ENCODE measurements at regions of chr12 and their contacts with region 1.

Region 1: GRCh38 chr12:53543539-53543938 is 36.3 kb upstream of the NPFF start:
- DNase-seq: peak in 3 of 5 donors; percentile 18 to 53 (median 49)
- H3K4me3 ChIP-seq: no peak overlapping the region
- H3K4me3 Mint-ChIP-seq: no peak overlapping the region
- H3K27ac ChIP-seq: no peak overlapping the region
- H3K27ac Mint-ChIP-seq: peak overlapping the region in 7 of 8 donors; percentile 64 to 86 (median 72)
- H3K4me1 ChIP-seq: peaks cover 8% of the 10 kb centered on the region
- H3K4me1 Mint-ChIP-seq: peaks cover 4 to 12% (median 10%) of the 10 kb centered on the region in 3 donors
- H3K27me3 ChIP-seq: no peaks in the 10 kb centered on the region
- H3K27me3 Mint-ChIP-seq: no peaks in the 10 kb centered on the region

Region 2: DNA sequence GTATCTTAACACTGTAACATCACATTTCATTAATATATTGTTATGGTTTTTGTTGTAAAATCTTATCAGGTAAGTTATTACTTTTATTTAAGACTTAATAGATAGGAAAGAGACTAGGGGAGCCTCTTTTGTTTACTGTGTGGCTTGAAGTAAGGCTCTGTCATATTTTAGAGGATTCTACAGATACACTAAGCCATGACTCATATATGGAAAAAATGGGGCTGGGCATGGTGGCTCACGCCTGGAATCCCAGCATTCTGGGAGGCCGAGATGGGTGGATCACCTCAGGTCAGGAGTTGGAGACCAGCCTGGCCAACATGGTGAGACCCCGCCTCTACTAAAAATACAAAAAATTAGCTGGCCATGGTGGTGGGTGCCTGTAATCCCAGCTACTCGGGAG is 12.6 kb before region 1 on chr12:
- CTCF ChIA-PET with region 1: no interaction called
- POLR2A ChIA-PET with region 1: no interaction called
- DNase-seq: no peak
- H3K4me3 ChIP-seq: no peak overlapping the region
- H3K4me3 Mint-ChIP-seq: no peak overlapping the region
- H3K27ac ChIP-seq: no peak overlapping the region
- H3K27ac Mint-ChIP-seq: no peak overlapping the region
- H3K4me1 ChIP-seq: no peaks in the 10 kb centered on the region
- H3K4me1 Mint-ChIP-seq: no peaks in the 10 kb centered on the region
- H3K27me3 ChIP-seq: no peaks in the 10 kb centered on the region
- H3K27me3 Mint-ChIP-seq: peaks cover 0 to 2% of the 10 kb centered on the region in 2 donors

Region 3: DNA sequence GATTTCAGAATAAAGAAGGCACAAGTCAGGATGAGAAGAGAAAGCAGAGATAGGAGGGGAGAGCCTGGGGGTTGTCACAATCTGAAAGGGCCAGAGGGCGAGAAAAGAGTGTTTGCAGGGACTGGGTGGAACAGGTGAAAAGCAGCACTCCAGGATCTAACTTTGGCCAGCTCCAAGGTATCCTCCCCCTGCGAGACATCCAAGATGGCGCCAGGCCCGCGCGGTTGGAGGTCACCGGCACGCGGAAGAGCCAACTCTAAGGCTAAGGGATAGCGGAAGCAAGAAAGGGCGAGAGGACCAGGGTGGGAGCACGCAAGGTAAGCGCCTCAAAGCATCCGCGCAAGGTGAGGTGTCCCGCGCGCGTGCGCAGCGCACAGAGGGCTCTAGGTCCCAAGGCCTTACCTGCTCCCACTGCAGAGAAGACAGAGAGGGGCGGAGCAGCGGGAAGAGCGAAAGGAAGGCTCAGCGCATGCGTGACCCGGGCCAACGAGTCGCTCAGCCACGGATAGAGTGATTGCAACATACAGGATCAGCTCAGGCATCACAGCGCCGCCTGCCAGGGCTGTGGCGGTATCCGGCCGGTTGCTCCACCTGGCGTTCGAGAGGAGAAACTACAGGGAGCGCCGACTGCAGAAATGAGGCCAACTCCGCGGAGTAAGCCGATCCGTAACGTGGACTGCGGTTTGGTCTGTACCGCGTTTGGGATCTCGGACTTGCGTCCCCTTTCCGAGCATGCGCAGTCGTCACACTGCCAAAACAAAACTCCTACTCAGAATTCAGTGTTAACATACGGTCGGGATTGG is 132.3 kb after region 1 on chr12 and contains the start of gene ATP5MC2:
- CTCF ChIA-PET with region 1: interaction called, 11 read pairs
- POLR2A ChIA-PET with region 1: no interaction called
- DNase-seq: peak; percentile 95 to 98 (median 97)
- H3K4me3 ChIP-seq: peak within 1 kb of the TSS; percentile 84
- H3K4me3 Mint-ChIP-seq: peak within 1 kb of the TSS; percentile 87 to 98 (median 96)
- H3K27ac ChIP-seq: peak within 1 kb of the TSS; percentile 69
- H3K27ac Mint-ChIP-seq: peak within 1 kb of the TSS; percentile 81 to 98 (median 96)
- H3K4me1 ChIP-seq: peaks cover 19% of the 10 kb centered on the region
- H3K4me1 Mint-ChIP-seq: peaks cover 39 to 52% (median 39%) of the 10 kb centered on the region in 3 donors
- H3K27me3 ChIP-seq: peaks cover 8% of the 10 kb centered on the region
- H3K27me3 Mint-ChIP-seq: peaks cover 17 to 20% of the 10 kb centered on the region in 2 donors
- total RNA-seq, gene ATP5MC2: 342 to 350 TPM

Measured in CD8-positive, alpha-beta memory T cell (primary cell).